Activated CD4-positive, alpha-beta T cell treated with anti-CD3 and anti-CD28 coated beads, Interleukin-2, amount 10 ng/mL, durations not matched to agents 24 days and 14 days (primary cell): ENCODE measurements at regions of chr6 and their contacts with region 1.

Region 1: GRCh38 chr6:134938896-134939295 is 11.0 kb downstream of the ALDH8A1 start:
- DNase-seq: peak; percentile 80
- H3K4me3 Mint-ChIP-seq: peak overlapping the region; percentile 15
- H3K27ac Mint-ChIP-seq: no peak overlapping the region
- H3K4me1 Mint-ChIP-seq: peaks cover 23% of the 10 kb centered on the region
- H3K27me3 Mint-ChIP-seq: no peaks in the 10 kb centered on the region

Region 2: DNA sequence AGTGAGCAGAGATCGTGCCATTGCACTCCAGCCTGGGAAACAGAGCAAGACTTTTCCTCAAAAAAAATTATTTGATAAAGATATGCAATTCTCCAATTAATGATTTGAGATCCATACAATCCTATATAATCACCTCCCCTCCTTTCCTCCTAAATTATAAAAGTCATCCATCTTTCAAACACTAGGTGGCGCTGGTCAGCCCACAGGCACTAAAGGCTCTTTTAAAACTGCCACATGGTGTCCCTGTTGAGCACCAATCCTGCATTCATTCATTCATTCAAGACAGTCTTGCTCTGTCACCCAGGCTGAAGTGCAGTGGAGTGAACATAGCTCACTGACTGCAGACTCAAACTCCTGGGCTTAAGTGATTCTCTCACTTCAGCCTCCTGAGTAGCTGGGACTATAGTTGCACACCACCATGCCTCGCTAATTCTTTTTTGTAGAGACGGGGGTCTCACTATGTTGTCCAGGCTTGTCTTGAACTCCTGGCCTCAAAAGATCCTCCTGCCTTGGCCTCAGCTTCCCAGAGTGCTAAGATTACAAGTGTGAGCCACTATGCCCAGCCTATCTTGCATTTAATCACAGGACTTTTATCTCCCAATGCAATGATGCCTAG is 827.7 kb before region 1 on chr6:
- intact Hi-C with region 1: loop called (anchors 5 kb)
- DNase-seq: peak; percentile 82
- H3K4me3 Mint-ChIP-seq: no peak overlapping the region
- H3K27ac Mint-ChIP-seq: no peak overlapping the region
- H3K4me1 Mint-ChIP-seq: peaks cover 2% of the 10 kb centered on the region
- H3K27me3 Mint-ChIP-seq: peaks cover 21% of the 10 kb centered on the region

Region 3: DNA sequence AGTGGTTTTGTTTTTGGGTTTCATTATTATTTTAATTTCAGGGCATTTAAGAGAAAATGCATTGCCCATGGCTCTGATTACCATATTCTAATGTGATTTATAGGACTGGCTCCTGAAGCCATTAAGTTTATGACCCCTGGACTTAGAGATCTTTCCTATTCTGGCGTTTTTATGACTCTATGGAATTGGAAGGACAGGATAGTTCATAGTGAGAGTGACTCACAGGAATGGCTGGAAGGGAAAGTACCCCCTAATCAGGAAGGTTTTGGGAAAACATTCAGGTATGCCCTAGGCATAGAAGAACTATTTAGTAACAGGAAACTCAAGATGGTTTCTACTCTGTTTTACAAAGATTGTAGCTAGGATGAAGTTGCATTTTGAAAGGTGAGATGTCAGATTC is 777.9 kb before region 1 on chr6:
- intact Hi-C with region 1: loop called (anchors 1 kb)
- DNase-seq: no peak
- H3K4me3 Mint-ChIP-seq: no peak overlapping the region
- H3K27ac Mint-ChIP-seq: no peak overlapping the region
- H3K4me1 Mint-ChIP-seq: no peaks in the 10 kb centered on the region
- H3K27me3 Mint-ChIP-seq: peaks cover 2% of the 10 kb centered on the region

Region 4: DNA sequence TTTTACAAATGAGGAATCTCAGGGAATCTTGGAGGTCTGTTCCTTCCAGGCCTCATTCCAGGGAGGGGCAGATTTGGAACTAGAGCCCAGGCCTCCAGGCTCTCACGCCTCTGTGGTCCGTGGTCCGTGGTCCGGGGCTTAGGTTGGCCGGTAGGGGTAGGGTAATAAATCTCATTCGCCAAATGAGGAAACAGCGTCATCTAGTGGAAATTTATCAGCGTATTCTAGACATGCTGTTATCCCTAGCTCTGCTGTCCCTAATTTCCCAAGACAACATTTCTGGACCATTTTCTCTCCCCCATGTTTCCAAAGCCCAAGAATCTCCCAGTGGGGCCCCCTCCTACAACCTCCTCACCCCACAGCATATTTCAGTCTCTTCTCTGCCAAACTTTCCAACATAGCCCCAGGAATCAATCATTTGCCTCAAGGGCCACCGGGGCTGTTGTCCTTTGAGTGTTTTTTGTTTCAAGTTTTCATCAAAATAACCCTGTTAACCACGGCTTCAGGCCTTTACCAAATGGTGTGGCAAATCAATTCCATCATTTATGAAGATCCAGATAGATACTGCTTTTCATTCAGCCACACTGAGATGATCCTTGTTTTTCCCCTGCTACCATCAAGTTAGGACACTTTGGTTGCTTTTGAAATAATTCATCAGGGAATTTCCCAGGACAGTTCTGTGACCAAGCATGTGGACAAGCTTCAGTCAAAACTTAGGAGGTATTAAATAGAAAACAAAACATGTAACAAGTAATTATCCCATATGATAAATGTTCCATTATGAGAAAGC is 115.8 kb before region 1 on chr6:
- intact Hi-C with region 1: loop called (anchors 2 kb)
- DNase-seq: peak; percentile 81
- H3K4me3 Mint-ChIP-seq: no peak overlapping the region
- H3K27ac Mint-ChIP-seq: peak overlapping the region; percentile 16
- H3K4me1 Mint-ChIP-seq: peaks cover 6% of the 10 kb centered on the region
- H3K27me3 Mint-ChIP-seq: peaks cover 3% of the 10 kb centered on the region

Region 5: GRCh38 chr6:135267085-135267484 is 328.2 kb after region 1 on chr6:
- intact Hi-C with region 1: no loop called
- DNase-seq: no peak
- H3K4me3 Mint-ChIP-seq: no peak overlapping the region
- H3K27ac Mint-ChIP-seq: no peak overlapping the region
- H3K4me1 Mint-ChIP-seq: peaks cover 3% of the 10 kb centered on the region
- H3K27me3 Mint-ChIP-seq: no peaks in the 10 kb centered on the region